ENCODE measurements at regions of chr5 and their contacts with region 1.

Region 1: GRCh38 chr5:31581498-31582099 is 49.5 kb downstream of the C5orf22 start:
- DNase-seq: peak; percentile 56
- H3K4me3 ChIP-seq: no peak overlapping the region
- H3K27ac ChIP-seq: no peak overlapping the region
- H3K4me1 ChIP-seq: no peaks in the 10 kb centered on the region
- CTCF ChIP-seq: peak; percentile 84

Region 2: DNA sequence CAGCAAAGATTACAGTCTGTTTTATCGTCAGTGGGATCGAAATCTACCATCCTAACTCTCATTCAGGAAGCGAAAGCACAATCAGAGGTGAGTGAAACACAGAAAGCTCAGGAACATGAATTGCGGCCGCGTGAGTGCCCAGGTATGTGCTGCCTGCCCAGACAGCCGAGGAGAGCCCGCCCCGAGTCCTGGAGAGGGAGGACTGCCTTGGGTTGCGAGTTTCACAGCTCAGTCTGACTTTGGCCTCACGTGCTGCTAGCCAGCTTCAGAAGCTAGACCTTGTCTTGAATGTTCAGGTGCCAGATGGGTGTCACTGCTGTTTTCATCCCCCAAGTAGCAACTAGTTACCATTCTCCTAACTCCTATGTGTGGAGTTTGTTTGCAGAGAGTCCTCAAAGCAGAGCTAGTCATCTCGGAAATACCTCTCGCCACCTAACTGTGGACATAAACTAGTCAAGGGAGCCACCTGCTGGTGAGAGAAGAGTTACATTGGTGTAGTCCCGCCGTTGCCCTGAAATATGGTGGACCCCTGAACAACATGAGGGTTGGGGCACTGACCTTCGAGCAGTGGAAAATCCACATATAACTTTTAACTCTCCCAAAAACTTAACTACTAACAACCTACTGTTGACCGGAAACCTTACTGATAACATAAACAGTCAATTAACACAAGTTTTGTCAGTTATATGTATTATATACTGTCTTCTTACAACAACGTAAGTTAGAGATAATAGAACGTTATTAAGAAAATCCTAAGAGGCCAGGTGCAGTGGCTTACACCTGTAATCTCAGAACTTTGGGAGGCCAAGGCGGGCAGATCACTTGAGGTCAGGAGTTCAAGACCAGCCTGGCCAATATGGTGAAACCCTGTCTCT is 511.6 kb after region 1 on chr5:
- CTCF ChIA-PET with region 1: no interaction called
- POLR2A ChIA-PET with region 1: no interaction called
- intact Hi-C with region 1: loop called (anchors 2 kb)
- DNase-seq: peak; percentile 84
- H3K4me3 ChIP-seq: no peak overlapping the region
- H3K27ac ChIP-seq: no peak overlapping the region
- H3K4me1 ChIP-seq: no peaks in the 10 kb centered on the region
- CTCF ChIP-seq: peak; percentile 90

Measured in OCI-LY7 (cell line).